ENCODE measurements at regions of chr5 and their contacts with region 1.

Region 1: DNA sequence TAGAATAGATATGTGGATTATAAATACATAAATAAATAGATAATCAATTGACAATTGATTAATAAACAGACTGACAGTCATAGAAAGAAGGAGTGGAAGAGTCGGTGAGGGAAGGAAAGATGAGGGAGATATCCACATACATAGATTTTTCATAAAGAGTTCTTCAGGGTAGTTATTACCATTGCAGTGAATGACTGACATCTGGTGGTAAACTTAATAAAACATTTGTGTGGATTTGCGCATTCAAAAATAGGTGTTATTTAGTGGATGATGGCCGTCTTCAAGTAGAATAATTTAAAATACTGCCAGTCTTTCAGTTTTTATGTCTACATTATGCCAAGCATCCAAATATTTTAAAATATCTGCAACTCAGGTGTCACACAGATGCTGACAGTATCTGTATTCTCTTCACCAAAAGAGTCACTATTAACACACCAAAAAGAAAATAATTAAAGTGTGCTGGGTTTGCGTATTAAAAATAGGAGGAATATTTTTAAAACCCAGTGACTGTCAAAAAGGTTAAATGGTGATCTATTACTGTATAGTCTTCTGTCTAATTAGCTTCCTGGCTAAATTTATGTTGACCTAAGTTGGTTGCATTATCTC is 78.8 kb downstream of the GIN1 start:
- DNase-seq: no peak
- ATAC-seq: no peak
- H3K4me3 ChIP-seq: no peak overlapping the region
- H3K27ac ChIP-seq: no peak overlapping the region
- H3K4me1 ChIP-seq: no peaks in the 10 kb centered on the region
- H3K27me3 ChIP-seq: no peaks in the 10 kb centered on the region

Region 2: DNA sequence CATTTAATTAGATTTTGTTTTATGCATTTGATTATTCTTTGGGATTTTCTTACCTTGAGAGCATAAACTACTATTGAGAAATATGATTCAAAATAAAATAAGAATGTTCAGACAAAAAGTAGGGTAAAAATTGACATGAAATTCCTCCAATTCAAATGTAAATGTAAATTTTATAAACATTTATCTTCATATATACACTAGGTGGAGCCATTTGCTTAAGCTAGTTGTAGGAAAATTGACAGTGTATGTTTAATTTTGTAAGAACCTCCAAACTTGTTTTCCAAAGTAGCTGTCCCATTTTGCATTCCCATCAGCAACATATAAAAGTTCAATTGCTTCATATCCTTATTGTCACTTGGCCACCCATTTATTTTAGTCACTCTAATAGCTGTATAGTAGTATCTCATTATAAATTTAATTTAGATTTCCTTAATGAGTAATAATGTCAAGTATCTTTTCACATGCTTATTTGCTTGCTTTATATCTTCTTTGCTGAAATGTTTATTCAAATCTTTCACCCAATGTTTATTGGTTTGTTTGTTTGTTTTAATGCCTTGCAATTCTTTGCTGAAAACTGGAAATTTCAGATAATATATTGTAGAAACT is 504.7 kb before region 1 on chr5:
- intact Hi-C with region 1: loop called in 1 of 4 experiments (anchors 10 kb)
- DNase-seq: no peak
- ATAC-seq: no peak
- H3K4me3 ChIP-seq: no peak overlapping the region
- H3K27ac ChIP-seq: no peak overlapping the region
- H3K4me1 ChIP-seq: no peaks in the 10 kb centered on the region
- H3K27me3 ChIP-seq: no peaks in the 10 kb centered on the region

Region 3: GRCh38 chr5:102681407-102681983 is 359.7 kb before region 1 on chr5:
- intact Hi-C with region 1: loop called in 1 of 4 experiments (anchors 10 kb)
- DNase-seq: peak; percentile 72 to 83 (median 74)
- ATAC-seq: peak; percentile 77 to 86
- H3K4me3 ChIP-seq: no peak overlapping the region
- H3K27ac ChIP-seq: no peak overlapping the region
- H3K4me1 ChIP-seq: no peaks in the 10 kb centered on the region
- H3K27me3 ChIP-seq: no peaks in the 10 kb centered on the region

Region 4: DNA sequence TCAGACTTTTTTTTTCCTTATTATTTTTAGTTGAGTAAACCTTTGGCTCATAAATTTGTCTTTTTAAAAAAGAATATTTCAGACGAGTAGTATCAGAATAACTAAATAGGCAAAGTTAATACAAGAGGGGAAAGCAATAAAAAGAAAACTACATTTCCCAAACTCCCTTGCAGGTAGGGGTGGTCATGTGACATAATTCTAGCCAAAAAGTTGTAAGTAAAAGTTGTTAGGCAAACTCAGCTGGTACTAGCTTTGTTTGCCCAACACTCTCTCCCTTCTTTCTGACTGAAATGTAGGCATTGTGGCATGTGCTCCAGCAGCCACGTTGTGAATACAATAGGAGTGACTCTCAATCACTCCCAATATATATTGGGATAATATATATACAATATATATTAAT is 57.8 kb after region 1 on chr5:
- intact Hi-C with region 1: no loop called
- DNase-seq: no peak
- ATAC-seq: no peak
- H3K4me3 ChIP-seq: no peak overlapping the region
- H3K27ac ChIP-seq: no peak overlapping the region
- H3K4me1 ChIP-seq: no peaks in the 10 kb centered on the region
- H3K27me3 ChIP-seq: no peaks in the 10 kb centered on the region

Region 5: DNA sequence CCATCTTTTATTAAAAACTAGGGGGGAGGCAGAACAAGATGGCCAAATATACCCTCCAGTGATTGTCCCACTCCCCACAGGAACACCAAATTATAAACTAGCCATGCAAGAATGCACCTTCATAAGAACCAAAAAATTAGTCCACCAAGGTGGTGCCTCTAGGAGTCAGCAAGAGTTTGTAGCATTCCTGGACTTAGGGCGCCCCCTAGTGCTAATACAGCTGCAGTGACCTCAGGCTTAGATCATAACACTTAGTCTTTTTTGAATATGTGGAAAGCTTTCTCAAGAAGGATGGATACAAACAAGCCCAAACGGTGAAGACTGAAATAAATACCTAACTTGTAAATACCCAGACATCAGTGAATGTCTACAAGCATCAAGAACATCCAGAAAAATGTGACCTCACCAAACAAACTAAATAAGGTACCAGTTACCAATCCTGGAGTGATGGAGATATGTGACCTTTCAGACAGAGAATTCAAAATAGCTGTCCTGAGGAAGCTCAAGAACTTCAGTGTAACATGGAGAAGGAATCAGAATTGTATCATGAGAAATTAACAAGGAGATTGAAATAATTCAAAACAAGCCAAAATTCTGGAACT is 98.2 kb after region 1 on chr5:
- intact Hi-C with region 1: loop called in 2 of 4 experiments (anchors 5 to 10 kb)
- DNase-seq: peak; percentile 65 to 80 (median 65)
- ATAC-seq: peak; percentile 79 to 86
- H3K4me3 ChIP-seq: no peak overlapping the region
- H3K27ac ChIP-seq: no peak overlapping the region
- H3K4me1 ChIP-seq: no peaks in the 10 kb centered on the region
- H3K27me3 ChIP-seq: no peaks in the 10 kb centered on the region

Measured in right cardiac atrium (tissue), 5 donors.